Mammary epithelial cell (primary cell): ENCODE measurements at regions of chr18 and their contacts with region 1.

Region 1: DNA sequence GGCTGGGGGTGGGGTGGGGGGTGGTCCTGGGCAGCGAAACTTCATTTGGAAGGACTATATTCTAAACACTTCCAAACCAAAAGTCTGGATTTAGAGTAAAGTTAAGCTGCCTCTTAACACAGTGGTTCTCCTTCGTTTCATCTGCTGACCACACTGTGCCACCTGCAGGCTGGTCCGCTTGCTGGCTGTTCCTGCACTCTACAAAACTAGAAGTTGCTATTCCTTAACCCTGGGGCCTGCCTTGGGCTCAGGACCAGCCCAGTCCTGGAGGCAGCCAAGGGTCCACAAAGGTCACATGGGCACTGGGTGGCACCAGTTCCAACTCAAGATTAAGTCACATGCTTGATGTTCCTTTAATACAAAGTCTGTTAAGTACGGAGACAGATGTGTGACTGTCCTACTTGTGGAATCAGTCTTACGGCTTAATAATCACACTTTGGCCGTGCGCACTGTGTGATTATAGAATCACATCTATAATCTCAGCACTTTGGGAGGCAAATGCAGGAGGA is 195.4 kb downstream of the FAM210A start:
- DNase-seq: peak; percentile 2
- H3K4me3 ChIP-seq: no peak overlapping the region
- H3K27ac ChIP-seq: no peak overlapping the region
- H3K4me1 ChIP-seq: no peaks in the 10 kb centered on the region
- H3K27me3 ChIP-seq: no peaks in the 10 kb centered on the region
- CTCF ChIP-seq: peak; percentile 4 to 33

Region 2: GRCh38 chr18:13216092-13216582 is 314.8 kb before region 1 on chr18:
- CTCF ChIA-PET with region 1: no interaction called
- dilution Hi-C with region 1: no loop called
- in situ Hi-C with region 1: no loop called
- intact Hi-C with region 1: loop called (anchors 1 kb)
- DNase-seq: peak; percentile 42
- H3K4me3 ChIP-seq: no peak overlapping the region
- H3K27ac ChIP-seq: no peak overlapping the region
- H3K4me1 ChIP-seq: peaks cover 6% of the 10 kb centered on the region
- H3K27me3 ChIP-seq: peaks cover 24% of the 10 kb centered on the region
- CTCF ChIP-seq: peak; percentile 35 to 73